GM12878 (cell line): ENCODE measurements at regions of chr12 and their contacts with region 1.

Region 1: GRCh38 chr12:15772405-15773018 is 16.7 kb downstream of the EPS8 start:
- DNase-seq: no peak
- ATAC-seq: peak; percentile 4
- H3K4me3 ChIP-seq: no peak overlapping the region
- H3K27ac ChIP-seq: no peak overlapping the region
- H3K4me1 ChIP-seq: no peaks in the 10 kb centered on the region
- H3K27me3 ChIP-seq: no peaks in the 10 kb centered on the region
- CTCF ChIP-seq: peak; percentile 22 to 39 (median 30); a peak in 4 of 6 replicates
- EP300 ChIP-seq: no peak
- POLR2A ChIP-seq: no peak
- RAD21 ChIP-seq: peak; percentile 37; the same call in 1 of the 2 replicates

Region 2: DNA sequence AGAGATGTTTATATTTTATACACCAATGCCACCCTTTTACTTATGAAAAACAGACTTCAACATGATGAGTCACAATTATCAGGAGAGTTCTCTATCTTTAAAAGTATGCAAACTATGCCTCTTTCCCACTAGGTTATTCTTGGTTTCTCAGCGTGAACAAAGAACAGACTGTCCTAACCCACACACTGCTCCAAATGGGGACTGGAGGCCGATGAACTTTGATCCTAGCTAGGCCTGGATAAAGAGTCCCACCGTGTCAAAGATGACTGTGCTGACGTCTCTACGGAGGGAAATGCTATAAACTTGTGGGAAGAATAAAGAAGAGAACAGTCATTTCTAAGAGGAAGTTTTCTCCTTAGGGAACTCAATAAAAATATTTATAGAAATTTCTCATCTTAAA is 143.4 kb before region 1 on chr12:
- CTCF ChIA-PET with region 1: interaction called, 5 read pairs
- POLR2A ChIA-PET with region 1: no interaction called
- RAD21 ChIA-PET with region 1: interaction called, 5 read pairs
- SMC1A ChIA-PET with region 1: interaction called, 11 read pairs
- in situ Hi-C with region 1: no loop called
- intact Hi-C with region 1: no loop called
- DNase-seq: peak; percentile 46
- ATAC-seq: peak; percentile 91
- H3K4me3 ChIP-seq: no peak overlapping the region
- H3K27ac ChIP-seq: no peak overlapping the region
- H3K4me1 ChIP-seq: no peaks in the 10 kb centered on the region
- H3K27me3 ChIP-seq: no peaks in the 10 kb centered on the region
- CTCF ChIP-seq: no peak
- EP300 ChIP-seq: peak; percentile 73 to 78; a peak in 3 of 4 replicates
- POLR2A ChIP-seq: no peak
- RAD21 ChIP-seq: no peak

Region 3: DNA sequence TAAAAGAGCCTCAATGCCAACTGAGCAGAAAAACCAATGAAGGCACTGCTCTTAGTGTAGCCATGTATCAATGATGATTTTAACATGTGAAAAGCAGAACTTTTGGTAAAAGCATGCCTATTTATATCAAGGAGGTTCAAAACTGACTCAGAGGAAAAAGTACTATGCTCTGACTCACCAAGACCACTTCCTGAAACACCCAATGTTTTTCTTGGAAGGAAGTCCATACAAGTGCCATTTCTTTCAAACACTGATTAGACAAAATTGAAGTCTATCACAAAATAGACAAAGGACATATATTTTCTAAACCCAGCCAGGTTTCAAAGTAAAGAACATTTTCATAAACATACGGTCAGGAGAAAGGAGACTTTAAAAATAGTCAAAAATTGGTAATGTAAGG is 71.9 kb before region 1 on chr12:
- CTCF ChIA-PET with region 1: interaction called, 8 read pairs
- POLR2A ChIA-PET with region 1: interaction called, 10 read pairs
- RAD21 ChIA-PET with region 1: interaction called, 5 read pairs
- SMC1A ChIA-PET with region 1: interaction called, 9 read pairs
- in situ Hi-C with region 1: no loop called
- intact Hi-C with region 1: no loop called
- DNase-seq: peak; percentile 46
- ATAC-seq: peak; percentile 83
- H3K4me3 ChIP-seq: no peak overlapping the region
- H3K27ac ChIP-seq: no peak overlapping the region
- H3K4me1 ChIP-seq: no peaks in the 10 kb centered on the region
- H3K27me3 ChIP-seq: no peaks in the 10 kb centered on the region
- CTCF ChIP-seq: no peak
- EP300 ChIP-seq: peak; percentile 13 to 51; a peak in 1 of 4 replicates
- POLR2A ChIP-seq: no peak
- RAD21 ChIP-seq: no peak

Region 4: DNA sequence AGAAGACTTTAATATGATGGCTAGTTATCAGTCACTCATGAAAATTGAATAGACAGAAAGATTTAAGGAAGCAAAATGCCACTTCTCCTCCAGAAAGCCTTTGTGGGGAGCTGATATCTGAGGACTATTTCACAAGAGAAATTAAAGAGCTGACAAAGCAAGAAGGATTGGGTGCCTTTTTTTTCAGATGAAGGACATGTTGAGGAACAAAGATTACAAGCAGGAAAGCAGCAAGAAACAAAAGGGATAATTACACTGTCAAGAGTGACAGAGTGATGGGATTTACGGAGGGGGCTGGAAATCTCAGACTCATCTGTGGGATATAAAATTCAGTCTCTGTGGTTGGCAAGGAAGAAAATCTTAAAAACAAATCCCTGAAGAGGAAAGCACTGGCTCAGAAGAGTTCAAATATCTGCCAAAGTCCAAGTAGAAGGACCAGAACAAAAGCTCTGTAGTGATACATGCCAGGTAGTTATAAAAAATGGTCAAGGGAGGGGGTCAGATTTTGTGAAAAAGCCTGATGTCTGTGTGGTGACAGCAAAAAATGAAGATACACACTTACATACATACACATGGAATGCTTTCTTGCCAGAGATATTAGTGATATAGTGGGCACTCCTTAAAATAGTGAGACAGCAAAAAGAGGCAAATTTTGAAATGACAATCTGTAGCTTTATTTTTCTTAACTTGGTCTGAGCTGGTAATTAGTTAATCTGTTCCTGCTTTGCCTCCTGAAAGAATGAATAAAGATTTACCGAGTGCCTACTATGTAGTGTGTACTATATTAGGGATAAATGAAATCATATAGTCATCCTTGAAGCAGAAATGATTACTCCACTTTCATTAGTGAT is 46.3 kb before region 1 on chr12:
- CTCF ChIA-PET with region 1: interaction called, 30 read pairs
- POLR2A ChIA-PET with region 1: interaction called, 48 read pairs
- RAD21 ChIA-PET with region 1: interaction called, 52 read pairs
- SMC1A ChIA-PET with region 1: interaction called, 111 read pairs
- in situ Hi-C with region 1: no loop called
- intact Hi-C with region 1: no loop called
- DNase-seq: no peak
- ATAC-seq: peak; percentile 42
- H3K4me3 ChIP-seq: no peak overlapping the region
- H3K27ac ChIP-seq: no peak overlapping the region
- H3K4me1 ChIP-seq: no peaks in the 10 kb centered on the region
- H3K27me3 ChIP-seq: no peaks in the 10 kb centered on the region
- CTCF ChIP-seq: no peak
- EP300 ChIP-seq: no peak
- POLR2A ChIP-seq: no peak
- RAD21 ChIP-seq: no peak

Region 5: DNA sequence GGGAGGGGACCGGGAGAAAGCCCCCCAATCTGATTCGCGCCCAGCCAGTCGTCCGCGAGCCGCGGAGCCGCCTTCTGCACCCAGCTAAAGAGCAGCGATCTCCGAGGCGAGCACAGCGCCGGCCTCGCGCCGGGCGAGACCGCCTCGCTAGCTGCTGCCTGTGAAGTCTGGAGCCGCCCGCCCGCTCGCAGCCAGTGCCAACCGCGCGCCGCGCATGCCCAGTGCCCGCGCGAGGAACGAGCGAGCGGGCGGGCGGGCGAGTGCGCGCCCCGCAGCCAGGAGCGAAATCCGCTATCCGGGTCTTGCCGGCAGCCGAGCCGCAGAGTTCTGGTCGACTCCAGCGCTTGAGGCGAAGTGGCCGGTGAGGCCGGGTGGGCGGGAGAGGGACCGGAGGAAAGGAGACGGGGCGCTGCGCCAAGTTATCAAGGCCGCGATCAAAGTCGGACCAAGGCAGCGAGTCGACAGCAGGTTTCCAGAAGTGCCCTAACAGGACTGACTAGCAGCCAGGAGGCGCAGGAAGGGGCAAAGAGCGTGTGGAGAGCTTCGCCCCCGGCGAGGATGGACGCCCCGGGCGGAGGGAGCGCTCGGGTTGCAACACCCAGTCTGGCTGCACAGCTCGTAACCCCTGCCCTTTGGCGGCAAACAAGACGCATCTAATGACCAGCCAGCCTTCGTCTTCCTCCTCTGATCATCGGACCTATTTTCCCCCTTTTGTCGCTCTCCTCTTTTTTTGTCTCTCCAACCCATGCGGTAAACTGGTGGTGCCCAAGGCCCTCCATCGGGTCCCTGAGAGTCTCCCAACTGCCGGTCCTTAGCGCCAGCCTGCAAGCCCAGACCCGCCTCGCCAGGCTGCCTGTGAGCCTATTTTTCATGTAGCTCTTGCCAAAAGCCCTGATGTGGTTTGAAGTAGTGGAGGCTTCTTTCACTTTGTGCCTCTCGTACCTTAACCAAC is 17.0 kb after region 1 on chr12 and contains the start of gene EPS8:
- CTCF ChIA-PET with region 1: interaction called, 61 read pairs
- POLR2A ChIA-PET with region 1: interaction called, 48 read pairs
- RAD21 ChIA-PET with region 1: interaction called, 53 read pairs
- SMC1A ChIA-PET with region 1: interaction called, 201 read pairs
- in situ Hi-C with region 1: no loop called
- intact Hi-C with region 1: loop called (anchors 2 kb)
- DNase-seq: peak; percentile 50
- ATAC-seq: peak; percentile 87
- H3K4me3 ChIP-seq: peak within 1 kb of the TSS; percentile 79
- H3K27ac ChIP-seq: no peak within 1 kb of the TSS
- H3K4me1 ChIP-seq: no peaks in the 10 kb centered on the region
- H3K27me3 ChIP-seq: peaks cover 0 to 8% of the 10 kb centered on the region in 2 experiments; a peak in 2 of 4 replicates
- CTCF ChIP-seq: no peak
- EP300 ChIP-seq: 0 out of 4 replicates have a peak, but pooled peaks of 1 of the 2 experiments have one; percentile 18
- POLR2A ChIP-seq: peak; percentile 61; the same call in 1 of the 2 replicates
- RAD21 ChIP-seq: no peak
- polyA plus RNA-seq, gene EPS8: 1.3 to 1.6 TPM